Activated CD8-positive, alpha-beta memory T cell treated with anti-CD3 and anti-CD28 coated beads, Interleukin-2, amount 10 ng/mL, durations not matched to agents 7 days and 5 days (primary cell): ENCODE measurements at regions of chr11 and their contacts with region 1.

Region 1: GRCh38 chr11:66592457-66593302 is at the starts of genes CCDC87 and CCS:
- DNase-seq: peak; percentile 99
- ATAC-seq: peak; percentile 98
- H3K4me3 Mint-ChIP-seq: peak within 1 kb of the TSS; percentile 94
- H3K27ac Mint-ChIP-seq: peak within 1 kb of the TSS; percentile 96
- H3K4me1 Mint-ChIP-seq: peaks cover 28% of the 10 kb centered on the region
- H3K27me3 Mint-ChIP-seq: peaks cover 6% of the 10 kb centered on the region
- total RNA-seq, gene CCDC87: 0.12 TPM in 1 of 2 experiments, not detected in the other
- total RNA-seq, gene CCS: 30.1 to 38.0 TPM

Region 2: GRCh38 chr11:66207876-66208275 is 384.8 kb before region 1 on chr11:
- CTCF ChIA-PET with region 1: no interaction called
- DNase-seq: no peak
- ATAC-seq: no peak
- H3K4me3 Mint-ChIP-seq: no peak overlapping the region
- H3K27ac Mint-ChIP-seq: no peak overlapping the region
- H3K4me1 Mint-ChIP-seq: no peaks in the 10 kb centered on the region
- H3K27me3 Mint-ChIP-seq: no peaks in the 10 kb centered on the region

Region 3: DNA sequence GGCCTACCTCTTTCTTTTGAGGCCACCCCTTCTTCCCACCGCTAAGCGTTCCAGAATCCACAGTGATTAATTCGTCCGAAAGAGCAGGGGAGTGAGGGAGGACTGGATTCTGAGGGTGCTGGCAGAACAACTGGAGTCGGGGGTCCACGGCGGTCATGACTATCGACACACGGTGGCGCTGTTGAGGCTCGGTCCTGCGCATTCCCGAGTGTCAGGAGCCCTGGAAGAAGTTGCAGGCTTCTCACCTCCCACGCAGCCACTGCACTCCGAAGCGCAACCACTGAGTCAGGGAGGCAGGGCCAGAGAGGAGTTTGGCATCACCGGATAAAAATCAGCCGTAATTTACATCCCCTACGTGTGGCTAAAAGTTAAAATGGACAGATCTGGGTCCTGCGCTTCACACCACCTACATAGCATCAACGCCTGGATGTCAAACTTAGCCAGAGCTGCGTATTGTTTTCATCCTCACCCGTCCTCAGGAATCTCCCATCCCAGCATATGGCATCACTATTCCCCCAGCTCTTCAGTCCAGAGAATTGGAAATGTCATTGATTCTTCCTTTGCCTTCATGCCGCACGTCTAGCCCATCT is 13.6 kb before region 1 on chr11:
- CTCF ChIA-PET with region 1: interaction called, 33 read pairs
- DNase-seq: peak; percentile 78
- ATAC-seq: peak; percentile 80
- H3K4me3 Mint-ChIP-seq: no peak overlapping the region
- H3K27ac Mint-ChIP-seq: no peak overlapping the region
- H3K4me1 Mint-ChIP-seq: peaks cover 6% of the 10 kb centered on the region
- H3K27me3 Mint-ChIP-seq: peaks cover 14% of the 10 kb centered on the region

Region 4: GRCh38 chr11:66616379-66617154 is 23.9 kb after region 1 on chr11 and contains the start of gene RBM14:
- CTCF ChIA-PET with region 1: interaction called, 11 read pairs
- DNase-seq: peak; percentile 99
- ATAC-seq: peak; percentile 94
- H3K4me3 Mint-ChIP-seq: peak within 1 kb of the TSS; percentile 98
- H3K27ac Mint-ChIP-seq: peak within 1 kb of the TSS; percentile 98
- H3K4me1 Mint-ChIP-seq: peaks cover 41% of the 10 kb centered on the region
- H3K27me3 Mint-ChIP-seq: no peaks in the 10 kb centered on the region
- total RNA-seq, gene RBM14: 152 to 176 TPM

Region 5: DNA sequence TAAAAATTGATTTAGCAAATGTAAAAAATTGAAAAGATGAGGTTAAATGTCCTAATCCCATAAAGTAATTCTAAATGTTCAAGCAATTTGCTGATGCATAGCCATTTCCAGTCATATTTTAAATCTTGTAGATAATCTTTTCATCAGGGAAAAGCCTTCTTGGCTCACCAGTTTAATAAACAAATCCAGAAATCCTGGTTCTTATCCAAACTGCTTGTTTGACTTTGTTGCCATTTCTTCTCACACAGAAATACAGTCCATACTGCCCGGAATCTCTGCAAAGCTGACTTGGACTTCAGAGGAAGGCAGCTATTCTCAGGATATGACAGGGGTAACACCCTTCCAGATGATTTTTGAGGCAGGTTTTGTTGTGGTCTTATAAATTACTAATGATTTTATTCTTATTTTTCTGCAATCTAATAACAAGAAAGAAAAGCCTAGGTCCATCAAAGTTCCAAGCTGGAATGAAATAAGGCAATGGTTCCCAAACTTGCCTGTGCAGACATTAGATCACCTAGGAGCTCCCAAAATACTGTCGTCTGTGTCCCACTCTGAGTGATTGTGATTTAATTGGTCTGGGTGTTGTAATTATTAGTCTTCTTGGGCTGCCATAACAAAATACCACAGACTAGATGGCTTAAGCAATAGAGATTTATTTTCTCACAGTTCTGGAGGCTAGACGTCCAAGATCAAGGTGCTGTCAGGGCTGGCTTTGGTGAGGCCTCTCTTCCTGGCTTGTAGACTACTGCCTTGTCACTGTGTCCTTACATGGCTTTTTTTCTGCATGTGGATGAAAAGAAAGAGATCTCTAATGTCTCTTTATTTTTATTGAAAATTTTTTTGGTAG is 195.5 kb after region 1 on chr11:
- CTCF ChIA-PET with region 1: no interaction called
- DNase-seq: no peak
- ATAC-seq: no peak
- H3K4me3 Mint-ChIP-seq: no peak overlapping the region
- H3K27ac Mint-ChIP-seq: no peak overlapping the region
- H3K4me1 Mint-ChIP-seq: peaks cover 3% of the 10 kb centered on the region
- H3K27me3 Mint-ChIP-seq: no peaks in the 10 kb centered on the region